ENCODE measurements at regions of chr11 and their contacts with region 1.

Region 1: DNA sequence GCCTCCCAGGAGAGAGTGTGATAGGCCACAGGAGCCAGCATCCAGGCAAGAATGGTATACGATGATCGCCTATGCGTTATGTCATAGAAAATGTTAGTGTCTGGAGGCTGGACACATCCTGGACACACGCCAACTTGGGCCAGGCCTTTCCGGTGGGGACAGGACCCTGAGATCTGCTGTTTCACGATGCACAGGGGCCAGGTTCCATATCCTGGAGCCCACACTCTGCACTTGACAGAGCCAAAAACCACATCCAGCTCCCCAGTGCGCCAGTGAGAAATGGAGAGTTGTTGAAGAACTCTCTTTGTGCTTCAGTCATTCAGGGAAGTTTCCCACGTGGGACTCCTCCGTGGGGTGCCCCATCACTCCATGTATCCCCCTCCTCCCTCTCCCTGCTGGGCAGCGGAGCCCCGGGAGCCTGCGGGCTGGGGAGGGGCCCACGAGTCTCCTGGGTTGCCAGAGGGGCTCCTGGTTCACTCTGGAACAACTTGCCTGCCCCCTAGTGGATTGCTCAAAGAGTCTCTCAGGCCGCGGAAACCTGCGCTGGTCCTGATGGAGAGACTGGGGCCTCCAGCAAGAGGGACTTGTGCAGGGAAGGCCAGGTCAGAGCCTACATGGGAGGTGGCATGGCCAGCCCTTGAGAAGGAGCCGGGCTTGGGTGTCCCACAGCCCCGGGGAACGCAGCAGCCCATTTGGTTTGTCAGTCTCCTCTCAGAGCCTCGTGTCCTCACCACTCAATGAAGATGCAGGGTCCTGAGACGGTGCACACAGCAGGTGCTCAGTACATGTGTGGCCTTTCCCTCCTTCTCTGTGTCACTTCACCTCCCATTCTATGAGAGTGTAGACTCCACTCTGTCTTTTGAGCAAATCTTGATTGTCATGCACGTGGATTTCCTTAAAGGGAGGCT is 10.2 kb upstream of the LRRC32 start:
- DNase-seq: peak; percentile 84

Region 2: DNA sequence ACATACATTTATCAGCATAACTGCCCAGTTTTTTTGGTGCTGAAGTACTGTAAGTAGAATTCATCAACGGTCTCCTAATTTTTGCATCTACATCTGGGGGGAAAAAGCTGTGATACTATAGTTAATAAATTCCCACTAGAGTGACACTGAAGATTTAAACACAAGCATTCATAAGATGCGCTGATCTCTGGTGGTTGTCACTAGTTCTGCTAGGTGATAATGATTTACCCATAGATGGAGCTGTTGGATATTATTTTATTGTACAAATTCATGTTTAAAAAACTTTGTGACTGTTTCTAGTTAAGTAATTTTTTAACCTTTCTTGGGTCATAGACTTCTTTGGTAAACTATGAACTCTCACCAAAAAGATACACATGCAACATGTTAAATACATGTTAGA is 129.4 kb before region 1 on chr11:
- intact Hi-C with region 1: loop called (anchors 5 kb)
- DNase-seq: no peak

Region 3: DNA sequence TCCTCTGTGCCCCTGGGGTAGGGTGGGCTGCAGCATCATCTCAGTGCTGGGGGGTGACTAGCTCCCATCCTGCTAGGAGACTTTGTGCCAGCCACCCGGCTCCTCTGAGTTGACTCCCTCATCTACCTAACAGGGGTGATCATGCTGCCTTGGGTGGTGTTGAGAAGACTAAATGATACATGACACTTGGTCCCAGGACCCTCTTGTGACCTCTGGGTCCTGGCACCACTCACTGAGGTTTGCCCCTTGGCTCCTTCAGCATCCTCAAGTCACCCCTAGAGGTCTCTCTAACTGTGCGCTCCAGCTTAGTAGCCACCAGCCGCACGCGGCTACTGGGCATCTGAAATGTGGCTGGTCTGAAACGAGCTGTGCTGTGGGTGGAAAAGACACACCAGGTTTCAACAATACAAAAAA is 82.3 kb before region 1 on chr11:
- intact Hi-C with region 1: loop called (anchors 2 kb)
- DNase-seq: no peak

Measured in cardiac septum (tissue), 1 donor.